GM10248 (cell line): ENCODE measurements at regions of chr17 and their contacts with region 1.

Region 1: DNA sequence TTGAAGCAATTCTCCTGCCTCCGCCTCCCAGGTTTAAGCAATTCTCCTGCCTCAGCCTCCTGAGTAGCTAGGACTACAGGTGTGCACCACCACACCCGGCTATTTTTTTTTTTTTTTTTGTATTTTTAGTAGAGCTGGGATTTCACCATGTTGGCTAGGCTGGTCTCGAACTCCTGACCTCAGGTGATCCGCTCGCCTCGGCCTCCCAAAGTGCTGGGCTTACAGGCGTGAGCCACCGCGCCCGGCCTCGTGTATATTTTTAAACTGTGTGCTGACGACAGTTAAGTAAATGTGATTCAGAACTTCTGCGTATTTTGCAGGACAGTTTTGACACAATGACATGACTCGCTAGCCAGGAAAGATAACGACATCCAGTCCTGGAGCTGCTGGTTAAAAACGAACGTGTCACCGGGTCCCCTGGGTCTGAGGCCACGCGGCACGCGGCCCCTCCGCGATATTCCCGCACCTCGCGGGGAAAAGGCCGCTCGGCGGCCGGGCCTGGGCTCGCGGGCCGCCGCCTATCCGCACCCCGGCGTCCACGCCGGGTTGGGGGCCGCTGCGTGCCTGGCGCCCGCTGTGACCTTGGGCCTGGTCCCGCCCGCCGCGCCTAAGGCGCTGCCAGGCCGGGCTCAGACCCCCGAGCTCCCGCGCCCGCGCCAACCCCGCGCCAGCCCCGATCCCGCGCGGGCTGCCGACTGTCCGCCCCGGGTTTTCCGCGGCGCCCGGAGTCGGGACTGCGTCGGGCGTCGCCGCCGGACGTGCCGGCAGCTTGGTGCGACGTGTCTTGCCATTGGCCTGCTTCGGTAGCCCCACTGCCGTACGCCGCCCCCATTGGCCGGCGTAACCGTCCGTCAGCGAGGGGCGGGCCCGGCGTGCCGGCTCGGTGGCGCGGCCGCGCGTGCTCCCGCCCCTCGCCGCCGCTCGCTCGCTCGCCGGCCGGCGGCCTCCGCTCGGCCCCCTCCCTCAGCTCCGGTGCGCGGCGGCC is at the start of gene FOXK2:
- DNase-seq: peak; percentile 100
- CTCF ChIP-seq: no peak

Region 2: DNA sequence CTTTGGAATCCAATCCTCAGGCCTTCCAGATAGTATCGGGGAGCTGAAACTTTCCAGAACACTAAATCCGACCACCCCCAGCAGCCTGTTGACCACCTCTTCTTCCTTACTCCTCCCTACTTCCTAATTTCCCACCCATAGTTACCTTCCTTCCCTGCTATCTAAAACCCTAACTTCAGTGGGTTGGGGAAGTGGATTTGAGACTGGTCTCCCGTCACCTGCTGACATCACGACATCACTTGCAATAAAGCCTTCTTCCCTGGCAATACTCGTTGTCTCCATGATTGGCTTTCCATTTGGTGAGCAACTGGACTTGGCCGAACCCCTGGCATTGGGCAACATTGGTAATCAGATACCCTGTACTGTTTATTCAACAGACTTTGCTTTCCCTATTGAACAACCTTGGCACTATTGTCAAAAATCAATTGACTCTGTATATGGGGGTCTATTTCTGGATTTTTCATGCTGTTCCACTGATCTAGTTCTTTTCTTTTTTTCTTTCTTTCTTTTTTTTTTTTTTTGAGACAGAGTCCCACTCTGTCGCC is 11.4 kb before region 1 on chr17:
- CTCF ChIA-PET with region 1: interaction called, 12 read pairs
- POLR2A ChIA-PET with region 1: interaction called, 8 read pairs
- DNase-seq: no peak
- CTCF ChIP-seq: no peak

Region 3: DNA sequence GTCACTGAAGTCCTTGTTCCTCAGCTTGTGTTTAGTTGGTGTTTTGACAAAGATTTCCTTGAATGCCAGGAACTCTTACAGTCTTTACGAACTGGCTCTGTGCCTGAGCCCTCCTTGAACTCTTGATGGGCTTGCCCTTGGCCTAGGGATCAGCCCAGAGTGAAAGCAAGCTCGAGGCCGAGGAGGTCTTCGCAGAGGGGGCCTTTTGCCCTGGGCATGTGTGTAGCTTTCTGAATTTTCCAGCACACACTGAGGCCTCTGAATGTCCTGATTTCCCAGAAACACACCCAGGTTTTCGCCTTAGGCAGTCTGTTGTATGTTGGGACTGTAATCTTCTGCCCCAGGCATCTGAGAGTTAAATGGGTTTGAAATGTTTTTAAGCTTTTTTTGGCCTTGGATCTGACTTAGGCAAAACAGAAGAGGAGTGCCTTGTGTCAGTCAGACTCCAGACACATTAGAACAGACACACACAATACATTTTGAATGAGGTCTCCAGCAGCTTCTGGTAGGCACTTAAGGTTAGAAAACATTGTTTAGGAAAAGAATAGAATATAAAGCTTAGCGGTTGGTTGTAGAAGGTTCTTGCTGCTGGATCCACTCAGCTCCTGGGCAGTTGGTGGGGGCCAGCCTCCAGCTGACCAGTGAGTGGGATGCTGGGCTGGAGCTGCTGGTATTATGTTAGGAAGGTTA is 17.5 kb after region 1 on chr17:
- CTCF ChIA-PET with region 1: interaction called, 14 read pairs
- POLR2A ChIA-PET with region 1: no interaction called
- DNase-seq: no peak
- CTCF ChIP-seq: no peak